Vagina (tissue), 2 donors: ENCODE measurements at regions of chr7 and their contacts with region 1.

Region 1: GRCh38 chr7:35024298-35024697 is 13.0 kb downstream of the DPY19L1 start:
- DNase-seq: no peak
- H3K4me3 ChIP-seq: no peak overlapping the region
- H3K27ac ChIP-seq: no peak overlapping the region
- H3K4me1 ChIP-seq: no peaks in the 10 kb centered on the region
- H3K27me3 ChIP-seq: no peaks in the 10 kb centered on the region
- CTCF ChIP-seq: no peak
- POLR2A ChIP-seq: no peak

Region 2: DNA sequence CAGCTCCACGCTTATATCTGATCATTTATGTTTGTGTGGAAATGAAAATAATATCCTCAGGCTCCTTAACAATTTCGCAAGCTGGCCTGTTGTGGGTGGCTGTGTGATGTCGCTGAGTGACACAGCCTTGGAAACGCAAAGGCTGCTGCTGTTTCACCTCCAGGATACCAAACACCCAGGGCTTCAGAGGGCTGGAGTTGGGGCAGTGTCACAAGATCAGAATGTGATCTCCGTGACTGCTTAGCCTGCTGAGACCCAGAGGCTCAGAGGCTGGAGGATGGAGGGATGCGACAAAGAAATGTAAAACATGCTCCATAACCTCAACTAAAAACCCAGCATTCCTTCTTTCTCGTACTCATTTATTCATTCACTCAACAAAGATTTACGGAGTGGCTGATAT is 1156.1 kb before region 1 on chr7:
- intact Hi-C with region 1: loop called (anchors 5 kb)
- DNase-seq: no peak
- H3K4me3 ChIP-seq: no peak overlapping the region
- H3K27ac ChIP-seq: no peak overlapping the region
- H3K4me1 ChIP-seq: no peaks in the 10 kb centered on the region
- H3K27me3 ChIP-seq: no peaks in the 10 kb centered on the region
- CTCF ChIP-seq: no peak
- POLR2A ChIP-seq: no peak